ENCODE measurements at regions of chr11 and their contacts with region 1.

Region 1: GRCh38 chr11:128342511-128343134 is 244.7 kb downstream of the ETS1 start:
- DNase-seq: peak in 7 of 9 experiments; percentile 21 to 74 (median 55)
- ATAC-seq: peak; percentile 68
- H3K4me3 ChIP-seq: peak overlapping the region in 1 of 2 experiments; percentile 43
- H3K4me3 Mint-ChIP-seq: no peak overlapping the region
- H3K27ac ChIP-seq: peak overlapping the region; percentile 68 to 77
- H3K27ac Mint-ChIP-seq: peak overlapping the region; percentile 97
- H3K4me1 ChIP-seq: peaks cover 59% of the 10 kb centered on the region
- H3K4me1 Mint-ChIP-seq: peaks cover 79% of the 10 kb centered on the region
- H3K27me3 ChIP-seq: no peaks in the 10 kb centered on the region
- H3K27me3 Mint-ChIP-seq: no peaks in the 10 kb centered on the region
- CTCF ChIP-seq: no peak

Region 2: GRCh38 chr11:128302425-128303186 is 40.0 kb before region 1 on chr11:
- CTCF ChIA-PET with region 1: no interaction called
- POLR2A ChIA-PET with region 1: interaction called, 7 read pairs
- intact Hi-C with region 1: loop called in 1 of 2 experiments (anchors 1 kb)
- DNase-seq: peak; percentile 49 to 97 (median 72)
- ATAC-seq: peak; percentile 85
- H3K4me3 ChIP-seq: peak overlapping the region; percentile 46 to 51
- H3K4me3 Mint-ChIP-seq: peak overlapping the region; percentile 88
- H3K27ac ChIP-seq: peak overlapping the region; percentile 87 to 89
- H3K27ac Mint-ChIP-seq: peak overlapping the region; percentile 99
- H3K4me1 ChIP-seq: peaks cover 88% of the 10 kb centered on the region
- H3K4me1 Mint-ChIP-seq: peaks cover 92% of the 10 kb centered on the region
- H3K27me3 ChIP-seq: no peaks in the 10 kb centered on the region
- H3K27me3 Mint-ChIP-seq: no peaks in the 10 kb centered on the region
- CTCF ChIP-seq: no peak

Region 3: GRCh38 chr11:128328955-128329551 is 13.6 kb before region 1 on chr11:
- CTCF ChIA-PET with region 1: interaction called, 13 read pairs
- POLR2A ChIA-PET with region 1: interaction called, 16 read pairs
- intact Hi-C with region 1: loop called (anchors 1 to 2 kb)
- DNase-seq: peak in 4 of 9 experiments; percentile 60 to 83 (median 68)
- ATAC-seq: peak; percentile 13
- H3K4me3 ChIP-seq: peak overlapping the region in 1 of 2 experiments; percentile 10
- H3K4me3 Mint-ChIP-seq: peak overlapping the region; percentile 44
- H3K27ac ChIP-seq: peak overlapping the region; percentile 54 to 55
- H3K27ac Mint-ChIP-seq: peak overlapping the region; percentile 94
- H3K4me1 ChIP-seq: peaks cover 76% of the 10 kb centered on the region
- H3K4me1 Mint-ChIP-seq: peaks cover 76% of the 10 kb centered on the region
- H3K27me3 ChIP-seq: no peaks in the 10 kb centered on the region
- H3K27me3 Mint-ChIP-seq: no peaks in the 10 kb centered on the region
- CTCF ChIP-seq: no peak

Region 4: GRCh38 chr11:128365044-128365443 is 22.4 kb after region 1 on chr11:
- CTCF ChIA-PET with region 1: interaction called, 6 read pairs
- POLR2A ChIA-PET with region 1: interaction called, 3 read pairs
- intact Hi-C with region 1: loop called in 1 of 2 experiments (anchors 2 kb)
- DNase-seq: peak in 2 of 9 experiments; percentile 54 to 56
- ATAC-seq: peak; percentile 46
- H3K4me3 ChIP-seq: no peak overlapping the region
- H3K4me3 Mint-ChIP-seq: no peak overlapping the region
- H3K27ac ChIP-seq: no peak overlapping the region
- H3K27ac Mint-ChIP-seq: no peak overlapping the region
- H3K4me1 ChIP-seq: no peaks in the 10 kb centered on the region
- H3K4me1 Mint-ChIP-seq: peaks cover 15% of the 10 kb centered on the region
- H3K27me3 ChIP-seq: no peaks in the 10 kb centered on the region
- H3K27me3 Mint-ChIP-seq: no peaks in the 10 kb centered on the region
- CTCF ChIP-seq: no peak

Region 5: GRCh38 chr11:128379587-128380580 is 37.3 kb after region 1 on chr11:
- CTCF ChIA-PET with region 1: no interaction called
- POLR2A ChIA-PET with region 1: interaction called, 3 read pairs
- intact Hi-C with region 1: loop called (anchors 5 kb)
- DNase-seq: peak in 6 of 9 experiments; percentile 8 to 56 (median 32)
- ATAC-seq: peak; percentile 85
- H3K4me3 ChIP-seq: no peak overlapping the region
- H3K4me3 Mint-ChIP-seq: no peak overlapping the region
- H3K27ac ChIP-seq: no peak overlapping the region
- H3K27ac Mint-ChIP-seq: peak overlapping the region; percentile 60
- H3K4me1 ChIP-seq: peaks cover 16% of the 10 kb centered on the region
- H3K4me1 Mint-ChIP-seq: peaks cover 31% of the 10 kb centered on the region
- H3K27me3 ChIP-seq: no peaks in the 10 kb centered on the region
- H3K27me3 Mint-ChIP-seq: no peaks in the 10 kb centered on the region
- CTCF ChIP-seq: no peak

Measured in CD8-positive, alpha-beta T cell (primary cell).